ENCODE measurements at regions of chr21 and their contacts with region 1.

Region 1: DNA sequence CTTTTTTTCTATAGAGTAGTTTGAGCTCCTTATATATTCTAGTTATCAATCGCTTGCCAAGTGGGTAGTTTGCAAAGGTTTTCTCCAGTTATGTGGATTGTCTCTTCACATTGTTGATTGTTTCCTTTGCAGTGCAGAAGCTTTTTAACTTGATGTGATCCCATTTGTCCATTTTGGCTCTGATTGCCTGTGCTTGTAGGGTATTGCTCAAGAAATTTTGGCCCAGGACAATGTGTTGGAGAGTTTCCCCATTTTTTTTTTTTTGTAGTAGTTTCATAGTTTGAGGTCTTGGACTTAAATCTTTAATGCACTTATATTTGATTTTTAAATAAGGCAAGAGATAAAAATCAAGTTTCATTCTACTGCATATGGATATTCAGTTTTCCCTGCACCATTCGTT is 774.8 kb upstream of the ADAMTS5 start:
- DNase-seq: no peak
- ATAC-seq: no peak
- H3K4me3 ChIP-seq: no peak overlapping the region
- H3K27ac ChIP-seq: no peak overlapping the region
- H3K4me1 ChIP-seq: no peaks in the 10 kb centered on the region
- H3K27me3 ChIP-seq: no peaks in the 10 kb centered on the region
- CTCF ChIP-seq: no peak

Region 2: DNA sequence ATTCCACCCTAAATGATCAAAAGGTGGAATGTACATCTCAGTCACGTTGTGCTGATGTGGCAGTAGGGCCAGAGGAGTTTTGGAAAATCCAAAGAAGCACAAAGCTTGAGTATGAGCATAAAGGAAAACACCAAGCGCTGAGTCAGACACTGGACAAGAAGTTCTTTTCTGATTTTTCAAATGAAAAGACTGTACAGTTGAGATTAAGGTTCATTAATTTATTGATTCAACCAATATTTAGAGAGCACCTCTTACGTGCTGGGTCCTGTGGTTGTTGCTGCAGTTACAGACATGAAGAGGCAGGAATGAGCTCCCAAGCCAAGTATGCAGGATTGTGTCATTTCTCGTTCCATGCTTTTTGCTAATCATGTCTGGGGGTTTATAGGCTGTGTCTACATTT is 1542.3 kb before region 1 on chr21:
- CTCF ChIA-PET with region 1: no interaction called
- POLR2A ChIA-PET with region 1: no interaction called
- in situ Hi-C with region 1: no loop called
- intact Hi-C with region 1: no loop called
- DNase-seq: no peak
- ATAC-seq: no peak
- H3K4me3 ChIP-seq: no peak overlapping the region
- H3K27ac ChIP-seq: no peak overlapping the region
- H3K4me1 ChIP-seq: no peaks in the 10 kb centered on the region
- H3K27me3 ChIP-seq: no peaks in the 10 kb centered on the region
- CTCF ChIP-seq: no peak

Region 3: GRCh38 chr21:27796106-27796505 is 54.4 kb after region 1 on chr21:
- CTCF ChIA-PET with region 1: no interaction called
- POLR2A ChIA-PET with region 1: no interaction called
- in situ Hi-C with region 1: no loop called
- intact Hi-C with region 1: loop called (anchors 5 kb)
- DNase-seq: no peak
- ATAC-seq: no peak
- H3K4me3 ChIP-seq: no peak overlapping the region
- H3K27ac ChIP-seq: no peak overlapping the region
- H3K4me1 ChIP-seq: no peaks in the 10 kb centered on the region
- H3K27me3 ChIP-seq: no peaks in the 10 kb centered on the region
- CTCF ChIP-seq: no peak

Measured in Panc1 (cell line).